Natural killer cell (primary cell): ENCODE measurements at regions of chrX and their contacts with region 1.

Region 1: GRCh38 chrX:49120099-49120498 is 3.4 kb downstream of the GPKOW start:
- DNase-seq: no peak
- ATAC-seq: no peak
- H3K4me3 ChIP-seq: no peak overlapping the region
- H3K4me3 Mint-ChIP-seq: no peak overlapping the region
- H3K27ac ChIP-seq: no peak overlapping the region
- H3K27ac Mint-ChIP-seq: peak overlapping the region in 1 of 2 donors; percentile 11
- H3K4me1 ChIP-seq: peaks cover 36% of the 10 kb centered on the region
- H3K4me1 Mint-ChIP-seq: peaks cover 24 to 44% of the 10 kb centered on the region in 2 donors
- H3K27me3 ChIP-seq: no peaks in the 10 kb centered on the region
- H3K27me3 Mint-ChIP-seq: no peaks in the 10 kb centered on the region
- CTCF ChIP-seq: no peak

Region 2: GRCh38 chrX:49002091-49002935 is 117.8 kb before region 1 on chrX and contains the start of gene GRIPAP1:
- intact Hi-C with region 1: no loop called
- DNase-seq: peak; percentile 67 to 94
- ATAC-seq: peak; percentile 77 to 89 (median 78)
- H3K4me3 ChIP-seq: peak within 1 kb of the TSS; percentile 98
- H3K4me3 Mint-ChIP-seq: peak within 1 kb of the TSS; percentile 97
- H3K27ac ChIP-seq: peak within 1 kb of the TSS; percentile 99
- H3K27ac Mint-ChIP-seq: peak within 1 kb of the TSS; percentile 97 to 99
- H3K4me1 ChIP-seq: peaks cover 22% of the 10 kb centered on the region
- H3K4me1 Mint-ChIP-seq: peaks cover 16 to 35% of the 10 kb centered on the region in 2 donors
- H3K27me3 ChIP-seq: no peaks in the 10 kb centered on the region
- H3K27me3 Mint-ChIP-seq: no peaks in the 10 kb centered on the region
- CTCF ChIP-seq: no peak
- total RNA-seq, gene GRIPAP1: 120 to 141 (median 131) TPM

Region 3: DNA sequence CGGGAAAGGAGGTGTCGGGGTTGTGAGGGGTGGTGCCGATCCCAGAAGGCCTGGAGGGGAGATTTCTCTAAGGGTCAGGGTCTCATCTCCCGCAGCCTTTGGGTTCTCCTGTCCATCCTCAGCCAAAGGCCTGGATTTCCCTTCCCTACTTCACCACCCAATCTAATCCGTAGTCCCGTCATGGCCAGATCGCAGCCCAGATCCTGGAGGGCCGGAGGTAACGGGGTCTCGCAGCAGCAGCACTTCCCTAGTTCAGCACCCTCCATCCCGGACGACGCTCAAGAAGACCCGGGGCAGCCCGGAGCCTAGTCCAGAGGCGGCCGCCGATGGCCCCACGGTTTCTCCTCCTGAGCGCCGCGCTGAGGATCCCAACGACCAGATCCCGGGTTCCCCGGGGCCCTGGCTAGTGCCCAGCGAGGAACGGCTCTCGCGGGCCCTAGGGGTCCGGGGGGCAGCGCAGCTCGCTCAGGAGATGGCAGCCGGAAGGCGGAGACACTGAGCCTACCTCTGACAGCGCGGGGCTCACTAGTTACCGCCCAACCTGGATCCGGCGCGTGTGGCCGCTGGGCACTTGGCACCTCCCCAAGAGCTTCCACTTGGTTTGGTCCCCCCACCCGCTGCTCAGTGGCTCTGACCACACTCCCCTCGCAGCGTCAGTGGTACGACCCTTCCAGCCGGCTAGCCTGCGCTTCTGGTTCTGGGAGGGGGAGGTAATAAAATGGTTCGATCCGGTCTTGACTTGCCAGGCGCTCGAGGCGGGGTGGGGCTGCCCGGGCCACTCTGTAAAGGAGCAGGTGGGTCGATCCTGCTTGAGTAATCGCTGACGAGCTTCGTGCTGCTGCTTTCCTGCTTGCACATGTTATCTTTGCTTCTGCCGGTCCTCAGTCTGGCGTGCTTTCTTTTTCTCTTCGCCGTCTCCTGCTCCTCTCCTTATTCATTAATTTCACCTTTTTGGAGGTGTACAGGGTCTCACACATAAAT is 46.1 kb after region 1 on chrX:
- intact Hi-C with region 1: loop called (anchors 2 kb)
- DNase-seq: peak; percentile 64 to 83
- ATAC-seq: peak; percentile 57 to 76 (median 63)
- H3K4me3 ChIP-seq: peak overlapping the region; percentile 41
- H3K4me3 Mint-ChIP-seq: peak overlapping the region; percentile 90
- H3K27ac ChIP-seq: peak overlapping the region; percentile 89
- H3K27ac Mint-ChIP-seq: peak overlapping the region; percentile 92 to 93
- H3K4me1 ChIP-seq: peaks cover 49% of the 10 kb centered on the region
- H3K4me1 Mint-ChIP-seq: peaks cover 22 to 44% of the 10 kb centered on the region in 2 donors
- H3K27me3 ChIP-seq: no peaks in the 10 kb centered on the region
- H3K27me3 Mint-ChIP-seq: no peaks in the 10 kb centered on the region
- CTCF ChIP-seq: peak; percentile 16

Region 4: DNA sequence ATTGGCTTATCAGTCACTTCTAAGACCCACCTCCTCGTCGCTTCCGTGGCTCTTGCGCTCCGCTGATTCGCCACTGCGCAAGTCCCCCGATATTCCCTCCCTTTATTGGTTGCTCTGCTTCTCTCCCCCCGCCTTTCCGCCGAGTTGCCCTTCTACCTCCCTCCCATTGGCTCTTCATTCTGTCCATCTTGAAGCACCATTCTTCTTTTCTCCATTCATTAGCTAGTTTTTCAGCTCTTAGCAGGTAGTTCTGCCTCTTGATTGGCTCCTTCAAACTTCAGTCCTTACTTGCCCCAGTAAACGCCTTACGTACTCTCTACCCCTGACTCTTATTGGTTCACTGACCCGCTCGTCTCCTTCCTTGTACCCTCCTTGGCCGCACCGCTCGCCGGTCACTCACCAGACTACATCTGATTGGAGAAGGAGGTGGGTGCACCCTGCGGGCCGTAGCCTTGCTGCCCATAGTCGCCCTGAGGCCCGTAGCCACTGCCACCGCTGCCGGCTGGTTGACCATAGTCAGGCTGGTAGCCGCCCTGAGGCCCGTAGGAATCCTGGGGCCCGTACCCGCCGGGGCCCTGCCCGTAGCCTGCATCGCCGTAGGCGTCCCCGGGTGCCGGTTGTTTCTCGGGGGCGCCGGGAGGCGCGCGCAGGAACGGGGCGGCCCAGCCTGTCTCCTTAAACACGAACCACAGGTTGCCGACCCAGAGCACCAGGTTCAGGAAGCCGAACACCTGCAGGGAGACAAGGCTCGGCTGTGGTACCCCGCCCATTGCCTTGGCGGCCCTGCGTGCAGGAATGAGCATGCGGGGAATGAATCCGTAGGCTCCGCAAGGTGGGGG is 71.2 kb after region 1 on chrX:
- intact Hi-C with region 1: loop called (anchors 1 kb)
- DNase-seq: peak; percentile 69 to 96
- ATAC-seq: peak; percentile 85 to 96 (median 87)
- H3K4me3 ChIP-seq: peak overlapping the region; percentile 52
- H3K4me3 Mint-ChIP-seq: peak overlapping the region; percentile 87
- H3K27ac ChIP-seq: peak overlapping the region; percentile 64
- H3K27ac Mint-ChIP-seq: peak overlapping the region; percentile 79 to 88
- H3K4me1 ChIP-seq: peaks cover 16% of the 10 kb centered on the region
- H3K4me1 Mint-ChIP-seq: peaks cover 0 to 21% of the 10 kb centered on the region in 2 donors
- H3K27me3 ChIP-seq: no peaks in the 10 kb centered on the region
- H3K27me3 Mint-ChIP-seq: no peaks in the 10 kb centered on the region
- CTCF ChIP-seq: no peak